Left colon (tissue), 2 donors: ENCODE measurements at regions of chr13 and their contacts with region 1.

Region 1: DNA sequence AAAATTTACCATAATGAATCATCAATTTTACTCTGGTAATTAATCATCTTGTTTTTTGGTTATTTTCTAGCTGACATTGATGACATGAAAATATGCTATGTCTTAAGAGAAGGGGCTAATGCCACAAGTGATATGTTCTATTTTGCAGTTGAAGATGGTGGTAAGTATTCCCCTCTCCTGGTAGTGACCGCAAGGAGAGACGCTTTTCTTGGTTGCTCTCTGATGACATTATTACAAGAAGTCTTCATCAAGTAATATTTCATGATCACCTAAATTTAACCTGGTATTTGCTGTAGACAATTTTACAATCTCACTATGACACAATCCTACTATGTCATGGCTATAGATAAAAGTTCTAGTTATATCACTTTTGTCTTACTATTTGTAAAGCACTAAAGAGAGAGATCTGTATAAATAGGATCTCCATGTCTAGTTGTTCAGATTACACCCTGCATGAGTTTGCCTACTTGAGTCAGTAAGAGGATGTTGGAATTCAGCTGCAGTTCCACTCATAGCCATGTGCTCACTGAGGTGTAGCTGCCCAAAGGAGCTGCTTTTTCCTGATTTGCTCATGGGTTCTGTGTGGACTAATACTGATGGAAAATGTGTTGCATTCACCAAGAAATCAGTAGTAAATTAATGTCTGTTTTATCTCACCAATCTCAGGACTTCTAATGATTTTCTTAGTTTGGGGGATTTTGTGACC is 10.9 kb downstream of the FREM2 start:
- DNase-seq: no peak
- ATAC-seq: no peak

Region 2: GRCh38 chr13:38755793-38756192 is 58.0 kb after region 1 on chr13:
- intact Hi-C with region 1: loop called in 1 of 2 experiments (anchors 10 kb)
- DNase-seq: no peak
- ATAC-seq: no peak